WTC11 (cell line): ENCODE measurements at regions of chr18 and their contacts with region 1.

Region 1: DNA sequence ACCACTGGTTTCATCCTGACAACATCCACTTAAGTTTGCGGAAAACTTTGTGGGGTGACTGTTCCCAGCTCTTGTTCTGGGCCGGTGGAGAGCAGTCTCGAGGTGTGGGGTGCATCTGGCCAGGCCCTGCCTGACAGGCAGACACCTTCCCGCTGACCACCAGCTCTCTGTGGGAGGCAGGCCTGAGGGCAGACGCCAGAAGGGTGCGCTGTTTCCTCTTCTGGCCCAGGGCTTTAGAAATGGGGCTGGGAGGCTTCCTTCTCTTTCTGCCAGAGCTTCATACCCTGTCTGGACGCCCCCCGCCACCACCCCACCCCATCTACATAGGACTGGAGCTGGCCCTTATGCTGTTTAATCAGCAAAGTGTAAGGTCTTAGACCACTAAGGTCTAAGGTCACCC is 263.8 kb downstream of the LOXHD1 start:
- DNase-seq: peak; percentile 82
- ATAC-seq: peak; percentile 93
- H3K4me3 Mint-ChIP-seq: no peak overlapping the region
- H3K27ac Mint-ChIP-seq: no peak overlapping the region
- H3K4me1 Mint-ChIP-seq: no peaks in the 10 kb centered on the region
- H3K27me3 Mint-ChIP-seq: no peaks in the 10 kb centered on the region
- CTCF ChIP-seq: peak; percentile 29; the same call in 1 of the 2 replicates

Region 2: GRCh38 chr18:46199515-46200147 is 193.6 kb before region 1 on chr18:
- CTCF ChIA-PET with region 1: no interaction called
- POLR2A ChIA-PET with region 1: no interaction called
- DNase-seq: no peak
- ATAC-seq: peak; percentile 47
- H3K4me3 Mint-ChIP-seq: no peak overlapping the region
- H3K27ac Mint-ChIP-seq: peak overlapping the region; percentile 93
- H3K4me1 Mint-ChIP-seq: peaks cover 15% of the 10 kb centered on the region
- H3K27me3 Mint-ChIP-seq: no peaks in the 10 kb centered on the region
- CTCF ChIP-seq: no peak

Region 3: DNA sequence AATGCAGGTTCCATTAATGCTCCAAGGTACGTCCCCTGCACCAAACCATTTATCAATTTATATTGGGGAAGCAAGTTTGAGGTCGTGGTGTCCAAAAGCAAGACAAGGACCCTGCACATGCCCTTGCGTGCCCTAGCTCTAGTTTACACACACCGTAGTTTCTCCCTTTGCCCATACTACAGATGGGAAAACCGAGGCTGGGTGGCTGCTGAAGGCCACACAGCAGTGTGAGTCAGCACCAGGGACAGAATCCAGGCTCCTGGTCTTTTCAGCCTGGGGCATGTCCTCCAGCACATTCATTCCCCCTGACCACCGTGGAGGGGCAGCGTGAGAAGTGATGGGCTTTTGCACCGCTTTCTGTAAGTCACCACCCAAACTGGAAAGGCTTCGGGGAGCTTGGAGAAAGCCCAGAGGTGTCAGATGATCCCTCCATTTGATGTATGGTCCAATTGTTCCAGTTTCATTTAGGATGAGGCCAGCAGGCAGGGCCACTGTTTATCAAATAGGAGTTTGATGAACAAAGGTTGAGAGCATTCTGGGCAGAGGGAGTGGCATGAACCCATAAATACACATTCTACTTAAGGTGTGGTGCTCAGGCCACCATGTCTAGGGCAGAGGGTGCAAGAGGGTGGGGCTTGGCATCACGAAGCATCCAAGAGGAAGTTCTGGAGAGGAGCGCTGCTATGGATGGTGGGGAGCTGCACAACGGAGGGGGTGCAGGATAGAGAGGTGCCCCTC is 14.9 kb before region 1 on chr18:
- CTCF ChIA-PET with region 1: interaction called, 15 read pairs
- POLR2A ChIA-PET with region 1: no interaction called
- DNase-seq: no peak
- ATAC-seq: no peak
- H3K4me3 Mint-ChIP-seq: no peak overlapping the region
- H3K27ac Mint-ChIP-seq: no peak overlapping the region
- H3K4me1 Mint-ChIP-seq: peaks cover 6% of the 10 kb centered on the region
- H3K27me3 Mint-ChIP-seq: no peaks in the 10 kb centered on the region
- CTCF ChIP-seq: no peak

Region 4: GRCh38 chr18:46433121-46433826 is 40.0 kb after region 1 on chr18:
- CTCF ChIA-PET with region 1: interaction called, 23 read pairs
- POLR2A ChIA-PET with region 1: interaction called, 3 read pairs
- DNase-seq: peak; percentile 92
- ATAC-seq: peak; percentile 98
- H3K4me3 Mint-ChIP-seq: peak overlapping the region; percentile 49
- H3K27ac Mint-ChIP-seq: no peak overlapping the region
- H3K4me1 Mint-ChIP-seq: peaks cover 32% of the 10 kb centered on the region
- H3K27me3 Mint-ChIP-seq: no peaks in the 10 kb centered on the region
- CTCF ChIP-seq: no peak

Region 5: GRCh38 chr18:46462523-46462922 is 69.3 kb after region 1 on chr18:
- CTCF ChIA-PET with region 1: interaction called, 21 read pairs
- POLR2A ChIA-PET with region 1: interaction called, 3 read pairs
- DNase-seq: no peak
- ATAC-seq: no peak
- H3K4me3 Mint-ChIP-seq: no peak overlapping the region
- H3K27ac Mint-ChIP-seq: no peak overlapping the region
- H3K4me1 Mint-ChIP-seq: peaks cover 61% of the 10 kb centered on the region
- H3K27me3 Mint-ChIP-seq: peaks cover 4% of the 10 kb centered on the region; the same call in 1 of the 2 replicates
- CTCF ChIP-seq: no peak

Region 6: GRCh38 chr18:46481048-46481846 is 88.0 kb after region 1 on chr18:
- CTCF ChIA-PET with region 1: interaction called, 21 read pairs
- POLR2A ChIA-PET with region 1: interaction called, 4 read pairs
- DNase-seq: peak; percentile 80
- ATAC-seq: peak; percentile 79
- H3K4me3 Mint-ChIP-seq: no peak overlapping the region
- H3K27ac Mint-ChIP-seq: no peak overlapping the region
- H3K4me1 Mint-ChIP-seq: peaks cover 14% of the 10 kb centered on the region
- H3K27me3 Mint-ChIP-seq: 0 out of 2 replicates have a peak, but pooled peaks cover 3% of the 10 kb centered on the region
- CTCF ChIP-seq: peak; percentile 88

Region 7: GRCh38 chr18:46622999-46623398 is 229.8 kb after region 1 on chr18:
- CTCF ChIA-PET with region 1: interaction called, 11 read pairs
- POLR2A ChIA-PET with region 1: no interaction called
- DNase-seq: no peak
- ATAC-seq: no peak
- H3K4me3 Mint-ChIP-seq: no peak overlapping the region
- H3K27ac Mint-ChIP-seq: no peak overlapping the region
- H3K4me1 Mint-ChIP-seq: peaks cover 9% of the 10 kb centered on the region
- H3K27me3 Mint-ChIP-seq: no peaks in the 10 kb centered on the region
- CTCF ChIP-seq: no peak